ENCODE measurements at regions of chr6 and their contacts with region 1.

Region 1: GRCh38 chr6:5318617-5319272 is 57.4 kb downstream of the FARS2 start:
- DNase-seq: peak; percentile 25
- H3K4me3 ChIP-seq: no peak overlapping the region
- H3K27ac ChIP-seq: no peak overlapping the region
- H3K4me1 ChIP-seq: no peaks in the 10 kb centered on the region
- H3K27me3 ChIP-seq: no peaks in the 10 kb centered on the region
- CTCF ChIP-seq: no peak

Region 2: DNA sequence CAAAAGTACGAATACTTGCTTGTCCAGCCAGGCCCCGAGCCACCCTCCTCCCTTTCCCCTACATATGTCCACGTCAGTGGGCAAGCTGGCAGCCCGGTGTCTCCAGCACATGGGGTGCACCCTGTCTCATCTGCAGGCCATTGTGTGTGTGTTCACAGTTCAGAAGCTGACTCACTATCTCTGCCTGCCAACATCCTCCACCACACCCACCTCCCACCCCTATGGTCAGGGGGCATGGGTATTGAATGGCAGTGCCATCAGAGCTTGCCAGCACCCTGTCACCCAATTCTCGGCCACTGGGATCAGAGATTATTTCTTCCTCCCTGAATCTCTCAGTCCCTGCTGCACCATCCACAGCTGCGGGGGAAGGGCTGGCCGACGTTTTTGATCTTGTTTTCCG is 138.3 kb after region 1 on chr6:
- CTCF ChIA-PET with region 1: interaction called, 12 read pairs
- POLR2A ChIA-PET with region 1: no interaction called
- intact Hi-C with region 1: no loop called
- DNase-seq: no peak
- H3K4me3 ChIP-seq: no peak overlapping the region
- H3K27ac ChIP-seq: no peak overlapping the region
- H3K4me1 ChIP-seq: no peaks in the 10 kb centered on the region
- H3K27me3 ChIP-seq: no peaks in the 10 kb centered on the region
- CTCF ChIP-seq: no peak